SK-N-SH (cell line): ENCODE measurements at regions of chr12 and their contacts with region 1.

Region 1: GRCh38 chr12:51897181-51897580 is 9.3 kb downstream of the ANKRD33 start:
- DNase-seq: peak; percentile 12
- H3K4me3 ChIP-seq: no peak overlapping the region
- H3K27ac ChIP-seq: no peak overlapping the region
- H3K4me1 ChIP-seq: peaks cover 0 to 9% of the 10 kb centered on the region in 2 experiments; a peak in 1 of 4 replicates
- H3K27me3 ChIP-seq: no peaks in the 10 kb centered on the region
- CTCF ChIP-seq: no peak
- EP300 ChIP-seq: no peak
- RAD21 ChIP-seq: no peak

Region 2: DNA sequence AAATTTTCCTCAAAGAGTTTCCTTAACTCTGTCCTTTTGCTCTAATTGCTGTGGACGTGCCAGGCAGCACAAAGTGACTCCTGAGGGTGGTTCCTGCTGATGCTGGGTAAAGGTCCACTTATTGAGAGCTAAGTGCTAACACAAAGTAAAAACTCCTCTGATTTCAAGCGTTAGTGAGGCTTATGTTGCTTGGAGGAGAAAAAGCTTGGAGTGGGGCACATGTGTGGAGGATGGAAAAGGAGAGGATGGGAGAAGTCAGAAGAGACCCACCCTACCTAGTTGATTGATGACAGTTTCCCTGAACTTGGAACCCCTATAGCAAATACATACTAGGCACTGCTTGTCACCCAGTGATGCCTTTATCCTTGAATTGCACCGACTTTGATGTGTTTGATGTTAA is 860.9 kb before region 1 on chr12:
- CTCF ChIA-PET with region 1: no interaction called
- POLR2A ChIA-PET with region 1: no interaction called
- DNase-seq: no peak
- H3K4me3 ChIP-seq: no peak overlapping the region
- H3K27ac ChIP-seq: no peak overlapping the region
- H3K4me1 ChIP-seq: 0 out of 4 replicates have a peak, but pooled peaks cover 0 to 4% of the 10 kb centered on the region in 2 experiments
- H3K27me3 ChIP-seq: no peaks in the 10 kb centered on the region
- CTCF ChIP-seq: no peak
- EP300 ChIP-seq: no peak
- RAD21 ChIP-seq: no peak

Region 3: GRCh38 chr12:51661199-51661598 is 236.0 kb before region 1 on chr12:
- CTCF ChIA-PET with region 1: no interaction called
- POLR2A ChIA-PET with region 1: no interaction called
- DNase-seq: no peak
- H3K4me3 ChIP-seq: no peak overlapping the region
- H3K27ac ChIP-seq: no peak overlapping the region
- H3K4me1 ChIP-seq: no peaks in the 10 kb centered on the region
- H3K27me3 ChIP-seq: no peaks in the 10 kb centered on the region
- CTCF ChIP-seq: no peak
- EP300 ChIP-seq: no peak
- RAD21 ChIP-seq: no peak

Region 4: DNA sequence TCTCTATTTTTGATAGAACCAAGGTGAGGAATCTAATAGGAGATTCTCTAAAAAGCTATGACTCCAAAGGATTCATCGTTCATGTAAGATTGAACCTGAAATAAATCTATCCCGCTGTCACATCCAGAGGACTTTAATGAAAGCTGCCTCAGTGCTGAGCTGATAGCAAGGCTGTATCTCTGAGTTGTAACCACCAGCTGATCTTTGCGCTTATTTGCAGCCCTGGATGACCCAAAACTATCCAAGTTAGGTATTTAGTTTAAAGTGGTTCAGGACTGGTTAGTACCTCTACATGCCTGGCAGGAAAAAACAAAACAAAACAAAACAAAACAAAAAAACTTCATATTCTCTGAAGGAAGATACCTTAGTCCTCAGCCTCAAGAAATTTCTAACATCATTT is 18.1 kb before region 1 on chr12:
- CTCF ChIA-PET with region 1: interaction called, 18 read pairs
- POLR2A ChIA-PET with region 1: no interaction called
- DNase-seq: no peak
- H3K4me3 ChIP-seq: no peak overlapping the region
- H3K27ac ChIP-seq: no peak overlapping the region
- H3K4me1 ChIP-seq: peaks cover 0 to 4% of the 10 kb centered on the region in 2 experiments; a peak in 1 of 4 replicates
- H3K27me3 ChIP-seq: no peaks in the 10 kb centered on the region
- CTCF ChIP-seq: no peak
- EP300 ChIP-seq: no peak
- RAD21 ChIP-seq: no peak

Region 5: DNA sequence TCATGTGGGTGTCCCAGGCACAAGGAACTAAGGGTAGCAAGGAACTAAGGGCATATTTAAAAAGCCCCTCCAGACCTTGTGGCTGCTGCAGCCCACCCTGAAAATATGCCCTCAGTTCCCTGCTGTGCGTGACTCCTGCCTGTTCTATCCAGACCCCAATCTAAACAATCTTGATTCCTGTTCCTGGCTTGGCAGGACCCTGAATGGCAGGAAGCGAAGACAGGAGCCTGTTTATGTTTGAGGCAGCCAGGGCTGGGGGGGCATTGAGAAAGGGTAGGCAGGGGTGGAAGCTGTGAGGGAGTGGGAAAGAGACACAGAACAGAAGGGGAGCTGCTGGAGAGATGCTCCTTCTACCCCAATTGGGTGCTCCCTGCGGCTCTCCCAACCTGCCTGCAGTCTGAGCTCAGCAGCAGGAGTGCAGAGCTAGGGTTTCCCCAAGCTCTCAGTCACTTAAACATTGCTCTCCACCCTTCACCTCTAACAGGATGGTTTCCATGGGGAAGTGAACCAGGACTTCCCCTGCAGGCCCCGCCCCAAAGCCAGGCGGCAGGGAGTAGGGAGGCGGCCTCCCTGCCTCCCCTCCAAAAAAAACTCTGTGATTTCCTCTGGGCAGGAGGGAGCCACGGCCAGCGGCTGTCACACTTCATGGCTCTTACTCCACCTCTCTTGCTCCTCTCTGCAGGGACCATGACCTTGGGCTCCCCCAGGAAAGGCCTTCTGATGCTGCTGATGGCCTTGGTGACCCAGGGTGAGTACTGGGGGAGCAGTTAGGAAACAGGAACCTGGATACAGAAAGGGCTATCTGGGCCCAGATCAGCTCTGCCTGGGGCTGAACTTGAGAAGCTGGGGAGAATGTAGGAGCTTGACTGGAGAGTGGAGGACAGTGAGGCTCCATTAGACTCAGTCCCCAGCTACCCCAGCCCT is 14.9 kb after region 1 on chr12:
- CTCF ChIA-PET with region 1: interaction called, 30 read pairs
- POLR2A ChIA-PET with region 1: no interaction called
- DNase-seq: peak; percentile 77
- H3K4me3 ChIP-seq: no peak overlapping the region
- H3K27ac ChIP-seq: peak overlapping the region in 1 of 2 experiments; percentile 84; a peak in 2 of 4 replicates
- H3K4me1 ChIP-seq: peaks cover 0 to 64% of the 10 kb centered on the region in 2 experiments; a peak in 2 of 4 replicates
- H3K27me3 ChIP-seq: no peaks in the 10 kb centered on the region
- CTCF ChIP-seq: no peak
- EP300 ChIP-seq: peak in 1 of 2 experiments; percentile 16; a peak in 1 of 4 replicates
- RAD21 ChIP-seq: no peak

Region 6: GRCh38 chr12:51951199-51951842 is 54.1 kb after region 1 on chr12 and contains the start of gene ACVR1B:
- CTCF ChIA-PET with region 1: interaction called, 18 read pairs
- POLR2A ChIA-PET with region 1: no interaction called
- DNase-seq: peak; percentile 95
- H3K4me3 ChIP-seq: peak within 1 kb of the TSS; percentile 84 to 94
- H3K27ac ChIP-seq: peak within 1 kb of the TSS in 1 of 2 experiments; percentile 89; a peak in 2 of 4 replicates
- H3K4me1 ChIP-seq: peaks cover 6 to 20% of the 10 kb centered on the region in 2 experiments; a peak in 2 of 4 replicates
- H3K27me3 ChIP-seq: 0 out of 2 replicates have a peak, but pooled peaks cover 9% of the 10 kb centered on the region
- CTCF ChIP-seq: no peak
- EP300 ChIP-seq: no peak; a peak in 1 of 4 replicates
- RAD21 ChIP-seq: peak; percentile 10; the same call in 1 of the 2 replicates
- polyA plus RNA-seq, gene ACVR1B: 12.1 and 13.5 TPM in 2 replicates

Region 7: GRCh38 chr12:52156736-52157565 is 259.8 kb after region 1 on chr12:
- CTCF ChIA-PET with region 1: no interaction called
- POLR2A ChIA-PET with region 1: no interaction called
- DNase-seq: peak; percentile 92
- H3K4me3 ChIP-seq: no peak overlapping the region; a peak in 1 of 4 replicates
- H3K27ac ChIP-seq: no peak overlapping the region
- H3K4me1 ChIP-seq: no peaks in the 10 kb centered on the region
- H3K27me3 ChIP-seq: no peaks in the 10 kb centered on the region
- CTCF ChIP-seq: peak; percentile 98
- EP300 ChIP-seq: no peak
- RAD21 ChIP-seq: peak; percentile 99